CD4-positive, alpha-beta memory T cell (primary cell): ENCODE measurements at regions of chr16 and their contacts with region 1.

Region 1: GRCh38 chr16:24539291-24539849 is at the start of gene RBBP6:
- DNase-seq: peak; percentile 91 to 95 (median 95)
- H3K4me3 ChIP-seq: peak within 1 kb of the TSS; percentile 70 to 93
- H3K4me3 Mint-ChIP-seq: peak within 1 kb of the TSS; percentile 98 to 100 (median 100)
- H3K27ac ChIP-seq: peak within 1 kb of the TSS; percentile 97
- H3K27ac Mint-ChIP-seq: peak within 1 kb of the TSS; percentile 99 to 100 (median 100)
- H3K4me1 ChIP-seq: peaks cover 34% of the 10 kb centered on the region
- H3K4me1 Mint-ChIP-seq: peaks cover 20 to 49% (median 35%) of the 10 kb centered on the region in 4 donors
- H3K27me3 ChIP-seq: no peaks in the 10 kb centered on the region
- H3K27me3 Mint-ChIP-seq: peaks cover 0 to 1% of the 10 kb centered on the region in 2 donors
- total RNA-seq, gene RBBP6: 92.6 to 102 TPM

Region 2: DNA sequence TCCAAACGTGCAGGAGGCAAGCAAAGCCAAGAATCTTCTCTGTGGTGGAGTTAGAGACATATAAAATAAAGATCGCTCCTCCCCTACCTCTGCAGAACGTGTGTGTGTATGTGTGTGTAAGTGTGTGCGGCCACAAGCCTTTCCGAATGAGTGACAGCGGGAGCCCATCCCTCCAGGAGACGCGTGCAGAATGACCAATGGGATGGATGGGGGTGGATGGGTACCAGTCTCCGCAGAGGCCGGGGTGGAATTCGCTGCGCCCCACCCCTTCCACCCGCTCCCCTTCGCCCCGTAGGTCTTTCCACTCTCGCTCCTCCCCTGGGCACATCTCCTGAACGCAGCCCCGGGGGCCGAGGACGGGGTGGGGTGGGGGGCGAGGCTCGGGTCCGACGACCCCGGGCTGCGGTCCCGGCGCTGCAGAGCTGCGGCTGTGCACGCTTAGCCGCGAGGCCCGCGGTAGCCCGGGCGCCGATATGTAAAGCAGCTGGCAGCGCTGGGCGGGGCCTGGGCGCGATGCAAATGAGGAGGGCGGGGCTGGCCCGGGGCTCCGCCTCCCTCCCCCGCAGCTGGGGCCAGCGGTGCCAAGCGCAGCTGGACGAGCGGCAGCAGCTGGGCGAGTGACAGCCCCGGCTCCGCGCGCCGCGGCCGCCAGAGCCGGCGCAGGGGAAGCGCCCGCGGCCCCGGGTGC is 703.8 kb before region 1 on chr16 and contains the start of gene PRKCB:
- CTCF ChIA-PET with region 1: no interaction called
- POLR2A ChIA-PET with region 1: no interaction called
- intact Hi-C with region 1: loop called (anchors 2 kb)
- DNase-seq: peak; percentile 89 to 91 (median 90)
- H3K4me3 ChIP-seq: peak within 1 kb of the TSS; percentile 62 to 68
- H3K4me3 Mint-ChIP-seq: peak within 1 kb of the TSS; percentile 97 to 100 (median 99)
- H3K27ac ChIP-seq: peak within 1 kb of the TSS; percentile 57
- H3K27ac Mint-ChIP-seq: peak within 1 kb of the TSS; percentile 90 to 96 (median 92)
- H3K4me1 ChIP-seq: peaks cover 62% of the 10 kb centered on the region
- H3K4me1 Mint-ChIP-seq: peaks cover 48 to 67% (median 54%) of the 10 kb centered on the region in 4 donors
- H3K27me3 ChIP-seq: no peaks in the 10 kb centered on the region
- H3K27me3 Mint-ChIP-seq: no peaks in the 10 kb centered on the region
- total RNA-seq, gene PRKCB: 98.1 to 106 TPM

Region 3: GRCh38 chr16:24550295-24550694 is 10.9 kb after region 1 on chr16:
- CTCF ChIA-PET with region 1: interaction called, 3 read pairs
- POLR2A ChIA-PET with region 1: interaction called, 19 read pairs
- intact Hi-C with region 1: no loop called
- DNase-seq: no peak
- H3K4me3 ChIP-seq: no peak overlapping the region
- H3K4me3 Mint-ChIP-seq: peak overlapping the region in 1 of 8 donors; percentile 57
- H3K27ac ChIP-seq: no peak overlapping the region
- H3K27ac Mint-ChIP-seq: peak overlapping the region in 1 of 7 donors; percentile 38
- H3K4me1 ChIP-seq: peaks cover 48% of the 10 kb centered on the region
- H3K4me1 Mint-ChIP-seq: peaks cover 31 to 65% (median 43%) of the 10 kb centered on the region in 4 donors
- H3K27me3 ChIP-seq: no peaks in the 10 kb centered on the region
- H3K27me3 Mint-ChIP-seq: no peaks in the 10 kb centered on the region

Region 4: DNA sequence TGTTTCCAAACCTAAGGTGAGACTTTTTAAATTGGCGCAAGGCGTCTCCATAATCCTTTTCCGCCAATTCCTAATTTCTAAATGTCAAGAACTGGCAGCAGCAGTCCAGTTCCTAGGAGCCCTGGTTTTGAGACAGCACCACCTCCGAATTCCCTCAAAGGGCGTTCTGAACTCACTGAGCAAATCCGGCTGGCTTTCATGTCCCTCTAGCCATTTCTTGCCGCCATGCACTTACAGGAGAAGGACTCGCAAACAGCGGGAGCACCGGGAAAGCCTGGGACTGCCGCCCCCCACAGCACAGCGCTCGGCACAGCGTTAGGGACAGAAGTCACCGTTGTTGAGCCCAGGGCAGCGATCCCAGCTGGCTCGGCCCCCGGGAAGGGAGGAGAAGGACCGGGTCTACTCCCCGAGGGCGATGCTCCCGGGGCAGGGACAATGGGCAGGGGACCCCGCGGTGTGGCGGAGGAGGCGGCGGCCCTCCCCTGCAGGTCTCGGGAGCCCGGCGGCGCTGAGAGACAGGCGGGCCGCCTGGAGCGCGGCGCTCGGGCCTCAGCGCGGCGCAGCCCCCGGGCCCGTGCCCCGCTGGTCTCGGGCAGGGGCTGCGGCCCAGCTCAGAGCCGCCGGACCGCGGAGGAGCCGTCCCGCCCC is 475.3 kb after region 1 on chr16:
- CTCF ChIA-PET with region 1: no interaction called
- POLR2A ChIA-PET with region 1: interaction called, 8 read pairs
- intact Hi-C with region 1: loop called (anchors 10 kb)
- DNase-seq: peak in 4 of 5 donors; percentile 15 to 48 (median 26)
- H3K4me3 ChIP-seq: peak overlapping the region; percentile 57 to 71
- H3K4me3 Mint-ChIP-seq: peak overlapping the region; percentile 88 to 99 (median 97)
- H3K27ac ChIP-seq: peak overlapping the region; percentile 89
- H3K27ac Mint-ChIP-seq: peak overlapping the region; percentile 92 to 99 (median 97)
- H3K4me1 ChIP-seq: peaks cover 72% of the 10 kb centered on the region
- H3K4me1 Mint-ChIP-seq: peaks cover 58 to 85% (median 73%) of the 10 kb centered on the region in 4 donors
- H3K27me3 ChIP-seq: no peaks in the 10 kb centered on the region
- H3K27me3 Mint-ChIP-seq: no peaks in the 10 kb centered on the region

Region 5: GRCh38 chr16:25111403-25112166 is 572.2 kb after region 1 on chr16 and contains the start of gene LCMT1:
- CTCF ChIA-PET with region 1: no interaction called
- POLR2A ChIA-PET with region 1: no interaction called
- intact Hi-C with region 1: loop called (anchors 1 kb)
- DNase-seq: peak; percentile 92 to 97 (median 94)
- H3K4me3 ChIP-seq: peak within 1 kb of the TSS; percentile 71 to 79
- H3K4me3 Mint-ChIP-seq: peak within 1 kb of the TSS; percentile 94 to 99 (median 96)
- H3K27ac ChIP-seq: peak within 1 kb of the TSS; percentile 64
- H3K27ac Mint-ChIP-seq: peak within 1 kb of the TSS; percentile 65 to 97 (median 96)
- H3K4me1 ChIP-seq: peaks cover 50% of the 10 kb centered on the region
- H3K4me1 Mint-ChIP-seq: peaks cover 43 to 66% (median 53%) of the 10 kb centered on the region in 4 donors
- H3K27me3 ChIP-seq: no peaks in the 10 kb centered on the region
- H3K27me3 Mint-ChIP-seq: no peaks in the 10 kb centered on the region
- total RNA-seq, gene LCMT1: 37.0 to 37.9 TPM